Left colon (tissue), 2 donors: ENCODE measurements at regions of chr19 and their contacts with region 1.

Region 1: GRCh38 chr19:2084993-2085720 is 11.0 kb downstream of the MOB3A start:
- DNase-seq: peak; percentile 78 to 87
- ATAC-seq: peak; percentile 44

Region 2: GRCh38 chr19:1935484-1936208 is 149.5 kb before region 1 on chr19:
- intact Hi-C with region 1: loop called in 1 of 2 experiments (anchors 10 kb)
- DNase-seq: no peak
- ATAC-seq: peak; percentile 24